WTC11 (cell line): ENCODE measurements at regions of chr7 and their contacts with region 1.

Region 1: GRCh38 chr7:18352339-18353255 is 143.0 kb upstream of the HDAC9 start:
- DNase-seq: peak; percentile 39
- ATAC-seq: peak; percentile 81
- H3K4me3 Mint-ChIP-seq: no peak overlapping the region
- H3K27ac Mint-ChIP-seq: peak overlapping the region; percentile 60; the same call in 1 of the 2 replicates
- H3K4me1 Mint-ChIP-seq: peaks cover 14% of the 10 kb centered on the region
- H3K27me3 Mint-ChIP-seq: no peaks in the 10 kb centered on the region
- CTCF ChIP-seq: peak; percentile 52

Region 2: GRCh38 chr7:18495412-18496340 is 143.1 kb after region 1 on chr7 and contains the start of gene HDAC9:
- CTCF ChIA-PET with region 1: interaction called, 19 read pairs
- POLR2A ChIA-PET with region 1: no interaction called
- DNase-seq: peak; percentile 32
- ATAC-seq: peak; percentile 97
- H3K4me3 Mint-ChIP-seq: peak within 1 kb of the TSS; percentile 79
- H3K27ac Mint-ChIP-seq: peak within 1 kb of the TSS; percentile 97
- H3K4me1 Mint-ChIP-seq: peaks cover 58% of the 10 kb centered on the region
- H3K27me3 Mint-ChIP-seq: no peaks in the 10 kb centered on the region
- CTCF ChIP-seq: no peak
- total RNA-seq, gene HDAC9: 14.6 to 18.8 TPM (median 18.0 TPM) in 3 replicates

Region 3: DNA sequence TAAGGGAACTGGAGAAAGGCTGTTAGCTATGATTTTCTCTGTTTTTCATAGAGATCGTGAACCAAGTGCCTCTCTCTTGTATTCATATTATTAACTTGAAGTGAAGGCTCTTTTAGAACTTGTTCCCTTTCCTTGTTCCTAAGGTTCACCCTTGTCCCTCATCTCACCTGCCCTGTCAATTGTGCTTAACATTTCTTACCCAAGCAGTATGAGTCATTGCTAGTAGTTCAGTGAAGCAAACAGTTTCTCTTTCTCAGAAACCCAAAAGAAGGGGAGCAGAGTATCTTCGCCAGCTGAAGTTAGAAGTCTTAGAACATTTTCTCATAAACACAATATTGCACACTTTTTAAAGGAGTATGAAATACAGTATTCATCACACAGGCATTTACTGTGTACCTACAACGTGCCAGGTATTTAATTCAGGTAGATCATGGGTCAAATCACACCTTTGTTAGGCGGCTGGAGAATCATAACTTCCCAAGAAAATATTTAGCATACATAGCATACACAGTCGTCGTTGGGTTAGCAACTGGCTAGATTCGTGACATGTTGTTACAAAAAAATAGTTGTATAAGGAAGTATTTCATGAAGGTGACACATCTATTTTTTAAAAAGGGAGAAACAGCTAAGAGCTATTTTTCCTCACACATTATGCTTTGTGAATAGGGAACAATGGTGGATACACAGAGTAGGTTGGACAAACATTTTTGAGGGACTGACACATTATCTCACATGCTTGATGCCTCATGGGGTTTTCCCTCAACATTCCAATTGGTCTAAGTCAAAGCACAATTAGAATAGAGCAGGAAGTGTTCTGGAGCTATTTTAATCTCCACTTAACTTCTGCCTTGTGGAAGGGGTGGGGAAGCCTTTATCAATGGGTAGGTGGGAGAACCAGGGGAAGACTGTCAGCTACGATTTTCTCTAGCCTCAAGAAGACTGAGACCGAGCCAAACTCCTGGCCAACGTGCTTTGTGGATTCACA is 156.1 kb after region 1 on chr7:
- CTCF ChIA-PET with region 1: interaction called, 29 read pairs
- POLR2A ChIA-PET with region 1: no interaction called
- DNase-seq: no peak
- ATAC-seq: peak; percentile 75
- H3K4me3 Mint-ChIP-seq: no peak overlapping the region
- H3K27ac Mint-ChIP-seq: peak overlapping the region; percentile 67
- H3K4me1 Mint-ChIP-seq: peaks cover 30% of the 10 kb centered on the region
- H3K27me3 Mint-ChIP-seq: no peaks in the 10 kb centered on the region
- CTCF ChIP-seq: no peak

Region 4: GRCh38 chr7:18570890-18571478 is 218.4 kb after region 1 on chr7:
- CTCF ChIA-PET with region 1: interaction called, 46 read pairs
- POLR2A ChIA-PET with region 1: no interaction called
- DNase-seq: no peak
- ATAC-seq: no peak
- H3K4me3 Mint-ChIP-seq: no peak overlapping the region
- H3K27ac Mint-ChIP-seq: no peak overlapping the region
- H3K4me1 Mint-ChIP-seq: peaks cover 20% of the 10 kb centered on the region
- H3K27me3 Mint-ChIP-seq: no peaks in the 10 kb centered on the region
- CTCF ChIP-seq: no peak

Region 5: DNA sequence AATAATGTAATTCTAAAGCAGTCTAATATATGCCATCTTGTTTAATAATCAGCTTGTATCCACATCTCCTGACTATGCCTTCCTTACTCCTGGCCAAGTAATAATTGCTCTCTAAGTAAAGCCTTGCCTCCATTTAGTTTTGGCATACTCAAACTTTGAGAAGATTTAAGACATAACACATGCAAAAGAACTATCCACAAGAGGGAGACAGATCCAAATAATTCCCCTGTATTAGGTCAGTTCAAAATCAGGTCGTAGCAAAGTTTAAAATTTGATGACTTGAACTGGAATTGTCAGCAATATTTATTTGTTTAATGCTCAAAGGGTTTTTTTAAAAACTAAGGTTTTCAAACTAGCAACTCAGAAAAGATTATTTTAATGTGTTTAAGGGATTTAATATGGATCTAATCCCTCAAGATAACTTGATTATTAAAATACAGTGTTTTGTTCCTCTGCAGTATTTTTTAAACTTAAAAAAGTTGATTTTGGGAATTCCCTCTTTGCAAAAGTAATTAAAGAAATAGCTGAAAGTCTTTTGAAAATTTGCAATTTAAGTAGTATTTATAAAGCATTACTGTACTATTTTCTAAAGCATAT is 238.2 kb after region 1 on chr7:
- CTCF ChIA-PET with region 1: interaction called, 18 read pairs
- POLR2A ChIA-PET with region 1: no interaction called
- DNase-seq: no peak
- ATAC-seq: peak; percentile 74
- H3K4me3 Mint-ChIP-seq: no peak overlapping the region
- H3K27ac Mint-ChIP-seq: no peak overlapping the region
- H3K4me1 Mint-ChIP-seq: peaks cover 4% of the 10 kb centered on the region
- H3K27me3 Mint-ChIP-seq: no peaks in the 10 kb centered on the region
- CTCF ChIP-seq: peak; percentile 18; the same call in 1 of the 2 replicates

Region 6: DNA sequence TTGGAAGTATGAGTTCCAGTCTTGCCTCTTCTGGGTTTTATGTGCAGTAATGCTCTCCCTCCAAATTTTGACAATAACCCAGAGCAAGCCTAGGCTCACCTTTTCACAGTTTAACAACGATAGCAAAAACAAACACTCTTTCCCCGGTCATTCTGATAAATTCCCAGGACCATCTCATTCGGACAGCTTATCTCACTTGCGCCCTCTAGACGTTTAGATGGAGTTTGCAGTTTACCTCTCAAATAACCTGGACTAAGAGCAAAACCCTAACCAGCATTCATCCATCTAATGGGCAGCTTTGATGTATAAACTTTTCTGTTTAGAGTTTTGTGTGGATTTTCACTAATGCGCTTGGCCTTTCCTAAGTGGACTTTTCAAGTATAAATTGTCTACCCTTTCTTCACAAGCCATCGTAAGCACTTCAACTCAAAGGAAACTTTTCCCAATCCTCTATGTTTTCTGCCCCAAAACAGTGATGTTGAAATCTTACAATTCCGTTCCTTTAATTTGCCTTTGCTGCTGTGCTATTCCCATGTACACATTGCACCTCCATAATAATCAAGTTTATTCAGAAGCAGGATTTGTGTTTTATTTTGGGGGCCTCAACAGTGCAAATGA is 257.8 kb after region 1 on chr7:
- CTCF ChIA-PET with region 1: interaction called, 11 read pairs
- POLR2A ChIA-PET with region 1: no interaction called
- DNase-seq: peak; percentile 12
- ATAC-seq: peak; percentile 91
- H3K4me3 Mint-ChIP-seq: no peak overlapping the region
- H3K27ac Mint-ChIP-seq: no peak overlapping the region
- H3K4me1 Mint-ChIP-seq: peaks cover 23% of the 10 kb centered on the region
- H3K27me3 Mint-ChIP-seq: no peaks in the 10 kb centered on the region
- CTCF ChIP-seq: peak; percentile 53

Region 7: DNA sequence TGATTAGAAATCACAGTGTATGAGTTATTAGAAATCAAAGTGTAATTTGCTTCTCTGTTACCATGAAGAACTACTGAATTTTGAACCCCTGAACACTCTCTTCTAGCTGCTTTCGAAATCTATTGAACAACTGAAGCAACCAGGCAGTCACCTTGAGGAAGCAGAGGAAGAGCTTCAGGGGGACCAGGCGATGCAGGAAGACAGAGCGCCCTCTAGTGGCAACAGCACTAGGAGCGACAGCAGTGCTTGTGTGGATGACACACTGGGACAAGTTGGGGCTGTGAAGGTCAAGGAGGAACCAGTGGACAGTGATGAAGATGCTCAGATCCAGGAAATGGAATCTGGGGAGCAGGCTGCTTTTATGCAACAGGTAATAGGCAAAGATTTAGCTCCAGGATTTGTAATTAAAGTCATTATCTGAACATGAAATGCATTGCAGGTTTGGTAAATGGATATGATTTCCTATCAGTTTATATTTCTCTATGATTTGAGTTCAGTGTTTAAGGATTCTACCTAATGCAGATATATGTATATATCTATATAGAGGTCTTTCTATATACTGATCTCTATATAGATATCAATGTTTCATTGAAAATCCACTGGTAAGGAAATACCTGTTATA is 313.6 kb after region 1 on chr7:
- CTCF ChIA-PET with region 1: interaction called, 31 read pairs
- POLR2A ChIA-PET with region 1: no interaction called
- DNase-seq: peak; percentile 86
- ATAC-seq: peak; percentile 98
- H3K4me3 Mint-ChIP-seq: no peak overlapping the region
- H3K27ac Mint-ChIP-seq: no peak overlapping the region
- H3K4me1 Mint-ChIP-seq: peaks cover 17% of the 10 kb centered on the region
- H3K27me3 Mint-ChIP-seq: no peaks in the 10 kb centered on the region
- CTCF ChIP-seq: peak; percentile 95